ENCODE measurements at regions of chr19 and their contacts with region 1.

Region 1: DNA sequence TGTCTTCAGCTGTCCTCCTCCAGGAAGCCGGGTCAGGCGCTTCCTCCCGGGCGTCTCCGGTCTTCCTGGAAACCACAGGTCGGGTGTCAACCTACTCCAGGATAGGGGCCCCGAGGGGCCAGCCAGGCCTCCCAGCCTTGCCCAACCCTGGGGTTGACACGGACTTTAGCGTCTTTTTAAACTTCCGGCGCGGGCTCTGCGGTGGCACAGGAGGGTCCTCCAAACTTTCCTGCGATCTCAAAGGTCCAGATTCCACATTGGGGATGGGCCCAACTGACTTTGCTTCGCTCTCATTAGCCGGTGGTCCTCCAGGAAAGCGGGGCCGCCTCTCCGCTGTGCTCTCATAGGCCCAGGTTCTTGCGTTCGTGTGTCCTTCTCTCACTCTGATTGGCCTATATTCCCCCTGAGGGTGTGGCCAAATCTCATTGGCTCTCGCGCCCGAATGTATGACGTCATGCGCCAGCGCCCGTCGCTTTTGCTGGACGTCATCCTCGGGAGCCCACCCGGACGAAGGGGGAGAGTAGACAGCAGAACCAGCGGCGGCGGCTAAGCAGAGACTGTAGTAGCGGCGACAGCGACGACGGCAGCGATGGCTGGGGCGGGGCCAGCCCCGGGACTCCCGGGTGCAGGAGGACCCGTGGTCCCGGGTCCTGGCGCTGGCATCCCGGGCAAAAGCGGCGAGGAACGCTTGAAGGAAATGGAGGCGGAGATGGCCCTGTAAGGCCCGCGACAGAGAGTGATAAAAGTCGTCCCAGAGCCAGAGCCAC is at the start of gene RBM42:
- DNase-seq: peak; percentile 100
- H3K4me3 Mint-ChIP-seq: peak within 1 kb of the TSS; percentile 87
- H3K27ac Mint-ChIP-seq: peak within 1 kb of the TSS; percentile 97
- H3K4me1 Mint-ChIP-seq: peaks cover 10% of the 10 kb centered on the region
- H3K27me3 Mint-ChIP-seq: no peaks in the 10 kb centered on the region
- CTCF ChIP-seq: no peak
- total RNA-seq, gene RBM42: 84.2 and 87.7 TPM in 2 replicates

Region 2: GRCh38 chr19:35462476-35462953 is 166.2 kb before region 1 on chr19:
- CTCF ChIA-PET with region 1: no interaction called
- POLR2A ChIA-PET with region 1: no interaction called
- intact Hi-C with region 1: no loop called
- DNase-seq: no peak
- H3K4me3 Mint-ChIP-seq: no peak overlapping the region
- H3K27ac Mint-ChIP-seq: no peak overlapping the region
- H3K4me1 Mint-ChIP-seq: no peaks in the 10 kb centered on the region
- H3K27me3 Mint-ChIP-seq: peaks cover 53% of the 10 kb centered on the region
- CTCF ChIP-seq: no peak

Region 3: DNA sequence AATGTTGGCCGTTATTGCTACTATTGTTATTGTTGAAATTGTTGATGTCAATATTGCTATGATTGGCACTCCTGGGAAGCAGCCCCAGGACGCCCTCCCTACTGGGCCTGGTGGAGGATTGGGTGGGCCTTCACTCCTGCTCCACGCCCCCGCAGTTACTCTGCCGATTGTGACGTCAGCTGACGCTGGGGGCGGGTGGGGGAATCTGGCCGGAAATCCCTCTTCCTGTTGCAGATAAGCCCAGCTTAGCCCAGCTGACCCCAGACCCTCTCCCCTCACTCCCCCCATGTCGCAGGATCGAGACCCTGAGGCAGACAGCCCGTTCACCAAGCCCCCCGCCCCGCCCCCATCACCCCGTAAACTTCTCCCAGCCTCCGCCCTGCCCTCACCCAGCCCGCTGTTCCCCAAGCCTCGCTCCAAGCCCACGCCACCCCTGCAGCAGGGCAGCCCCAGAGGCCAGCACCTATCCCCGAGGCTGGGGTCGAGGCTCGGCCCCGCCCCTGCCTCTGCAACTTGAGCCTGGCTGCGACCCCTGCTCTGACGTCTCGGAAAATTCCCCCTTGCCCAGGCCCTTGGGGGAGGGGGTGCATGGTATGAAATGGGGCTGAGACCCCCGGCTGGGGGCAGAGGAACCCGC is 12.9 kb after region 1 on chr19 and contains the start of gene ETV2:
- CTCF ChIA-PET with region 1: interaction called, 10 read pairs
- POLR2A ChIA-PET with region 1: interaction called, 24 read pairs
- intact Hi-C with region 1: loop called (anchors 2 kb)
- DNase-seq: no peak
- H3K4me3 Mint-ChIP-seq: peak within 1 kb of the TSS; percentile 76
- H3K27ac Mint-ChIP-seq: no peak within 1 kb of the TSS
- H3K4me1 Mint-ChIP-seq: peaks cover 13% of the 10 kb centered on the region
- H3K27me3 Mint-ChIP-seq: no peaks in the 10 kb centered on the region
- CTCF ChIP-seq: no peak
- total RNA-seq, gene ETV2: 0.44 and 1.0 TPM in 2 replicates

Region 4: DNA sequence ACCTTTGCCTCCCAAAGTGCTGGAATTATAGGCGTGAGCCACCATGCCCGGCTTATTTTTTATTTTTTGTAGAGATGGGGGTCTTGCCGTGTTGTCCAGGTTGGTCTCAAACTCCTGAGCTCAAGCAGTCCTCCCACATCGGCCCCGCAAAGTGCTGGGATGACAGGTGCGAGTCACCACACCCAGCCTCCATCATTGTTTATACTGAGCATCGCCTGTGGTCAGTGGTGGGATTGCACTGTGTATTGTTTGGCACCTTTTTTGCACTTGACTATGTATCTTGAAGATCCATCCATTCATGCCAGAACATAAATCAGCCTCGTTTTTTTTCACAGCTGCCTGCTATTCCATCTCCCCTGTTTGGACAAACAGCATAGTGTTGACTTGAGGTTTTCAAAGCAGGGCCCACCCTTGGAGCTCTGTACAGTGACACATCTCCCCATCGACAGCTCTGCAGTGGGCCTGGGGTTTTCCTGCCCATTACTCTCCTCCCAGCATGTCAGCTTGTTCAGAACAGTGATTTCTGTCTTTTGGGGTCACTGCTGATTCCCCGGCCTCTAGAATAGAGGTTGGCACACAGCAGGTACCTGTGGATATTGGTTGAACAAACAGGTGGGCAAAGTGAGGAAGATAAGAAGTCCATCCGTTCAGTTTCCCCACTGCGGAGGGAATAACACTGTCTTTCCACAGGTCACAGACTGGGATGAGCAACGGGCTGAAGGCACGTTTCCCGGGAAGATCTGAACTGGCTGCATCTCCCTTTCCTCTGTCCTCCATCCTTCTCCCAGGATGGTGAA is 29.4 kb after region 1 on chr19:
- CTCF ChIA-PET with region 1: no interaction called
- POLR2A ChIA-PET with region 1: no interaction called
- intact Hi-C with region 1: no loop called
- DNase-seq: no peak
- H3K4me3 Mint-ChIP-seq: no peak overlapping the region
- H3K27ac Mint-ChIP-seq: no peak overlapping the region
- H3K4me1 Mint-ChIP-seq: no peaks in the 10 kb centered on the region
- H3K27me3 Mint-ChIP-seq: no peaks in the 10 kb centered on the region
- CTCF ChIP-seq: no peak

Region 5: DNA sequence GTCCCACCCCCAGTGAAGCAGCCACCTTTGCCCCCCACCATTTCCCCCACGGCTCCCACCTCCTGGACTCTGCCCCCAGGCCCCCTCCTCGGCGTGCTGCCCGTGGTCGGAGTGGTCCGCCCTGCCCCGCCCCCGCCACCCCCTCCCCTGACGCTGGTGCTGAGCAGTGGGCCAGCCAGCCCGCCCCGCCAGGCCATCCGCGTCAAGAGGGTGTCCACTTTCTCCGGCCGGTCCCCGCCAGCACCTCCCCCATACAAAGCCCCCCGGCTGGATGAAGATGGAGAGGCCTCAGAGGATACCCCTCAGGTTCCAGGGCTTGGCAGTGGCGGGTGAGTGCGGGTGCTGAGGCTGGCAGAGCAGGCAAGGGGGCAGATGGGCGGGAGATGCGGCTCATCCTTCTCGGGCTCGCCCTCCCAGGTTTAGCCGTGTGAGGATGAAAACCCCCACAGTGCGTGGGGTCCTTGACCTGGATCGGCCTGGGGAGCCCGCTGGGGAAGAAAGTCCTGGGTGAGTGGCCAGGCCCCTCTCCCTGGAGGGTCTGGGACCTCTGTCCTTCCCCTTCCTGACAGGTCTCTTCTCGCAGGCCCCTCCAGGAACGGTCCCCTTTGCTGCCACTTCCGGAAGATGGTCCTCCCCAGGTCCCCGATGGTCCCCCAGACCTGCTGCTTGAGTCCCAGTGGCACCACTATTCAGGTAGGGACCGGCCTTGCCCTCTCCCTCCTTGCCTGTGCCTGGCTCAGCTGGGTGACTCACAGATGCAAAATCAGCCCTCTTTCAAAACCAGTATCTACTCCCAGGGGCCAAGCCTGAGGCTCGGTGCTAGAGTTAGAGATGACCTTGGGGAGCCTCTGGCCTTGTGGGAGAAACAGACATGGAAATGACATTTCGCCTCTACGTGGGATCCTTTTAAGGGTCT is 104.7 kb after region 1 on chr19:
- CTCF ChIA-PET with region 1: no interaction called
- POLR2A ChIA-PET with region 1: no interaction called
- intact Hi-C with region 1: no loop called
- DNase-seq: no peak
- H3K4me3 Mint-ChIP-seq: no peak overlapping the region
- H3K27ac Mint-ChIP-seq: no peak overlapping the region
- H3K4me1 Mint-ChIP-seq: no peaks in the 10 kb centered on the region
- H3K27me3 Mint-ChIP-seq: no peaks in the 10 kb centered on the region
- CTCF ChIP-seq: no peak

Region 6: DNA sequence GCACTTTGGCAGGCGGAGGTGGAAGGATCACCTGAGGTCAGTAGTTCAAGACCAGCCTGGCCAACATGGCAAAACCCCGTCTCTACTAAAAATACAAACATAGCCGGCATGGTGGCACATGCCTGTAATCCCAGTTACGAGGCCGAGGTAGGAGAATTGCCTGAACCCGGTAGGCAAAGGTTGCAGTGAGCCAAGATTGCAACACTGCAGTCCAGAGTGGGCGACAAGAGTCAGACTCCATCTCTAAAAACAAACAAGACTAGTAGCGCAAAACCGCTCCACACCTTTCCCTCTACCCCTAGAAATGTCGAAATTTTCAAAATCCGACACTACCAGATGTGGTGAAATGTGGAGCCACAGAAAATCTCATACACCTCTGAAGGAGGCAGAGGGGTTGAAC is 290.6 kb after region 1 on chr19:
- CTCF ChIA-PET with region 1: no interaction called
- POLR2A ChIA-PET with region 1: no interaction called
- intact Hi-C with region 1: no loop called
- DNase-seq: no peak
- H3K4me3 Mint-ChIP-seq: no peak overlapping the region
- H3K27ac Mint-ChIP-seq: no peak overlapping the region
- H3K4me1 Mint-ChIP-seq: no peaks in the 10 kb centered on the region
- H3K27me3 Mint-ChIP-seq: peaks cover 10% of the 10 kb centered on the region
- CTCF ChIP-seq: no peak

Measured in MCF 10A (cell line).